ENCODE measurements at regions of chr1 and their contacts with region 1.

Region 1: GRCh38 chr1:224434691-224435317 is at the start of gene WDR26:
- DNase-seq: peak; percentile 96
- H3K4me3 Mint-ChIP-seq: peak within 1 kb of the TSS; percentile 96
- H3K27ac Mint-ChIP-seq: peak within 1 kb of the TSS; percentile 97
- H3K4me1 Mint-ChIP-seq: peaks cover 43% of the 10 kb centered on the region
- H3K27me3 Mint-ChIP-seq: no peaks in the 10 kb centered on the region
- total RNA-seq, gene WDR26: 81.0 and 90.9 TPM in 2 replicates

Region 2: DNA sequence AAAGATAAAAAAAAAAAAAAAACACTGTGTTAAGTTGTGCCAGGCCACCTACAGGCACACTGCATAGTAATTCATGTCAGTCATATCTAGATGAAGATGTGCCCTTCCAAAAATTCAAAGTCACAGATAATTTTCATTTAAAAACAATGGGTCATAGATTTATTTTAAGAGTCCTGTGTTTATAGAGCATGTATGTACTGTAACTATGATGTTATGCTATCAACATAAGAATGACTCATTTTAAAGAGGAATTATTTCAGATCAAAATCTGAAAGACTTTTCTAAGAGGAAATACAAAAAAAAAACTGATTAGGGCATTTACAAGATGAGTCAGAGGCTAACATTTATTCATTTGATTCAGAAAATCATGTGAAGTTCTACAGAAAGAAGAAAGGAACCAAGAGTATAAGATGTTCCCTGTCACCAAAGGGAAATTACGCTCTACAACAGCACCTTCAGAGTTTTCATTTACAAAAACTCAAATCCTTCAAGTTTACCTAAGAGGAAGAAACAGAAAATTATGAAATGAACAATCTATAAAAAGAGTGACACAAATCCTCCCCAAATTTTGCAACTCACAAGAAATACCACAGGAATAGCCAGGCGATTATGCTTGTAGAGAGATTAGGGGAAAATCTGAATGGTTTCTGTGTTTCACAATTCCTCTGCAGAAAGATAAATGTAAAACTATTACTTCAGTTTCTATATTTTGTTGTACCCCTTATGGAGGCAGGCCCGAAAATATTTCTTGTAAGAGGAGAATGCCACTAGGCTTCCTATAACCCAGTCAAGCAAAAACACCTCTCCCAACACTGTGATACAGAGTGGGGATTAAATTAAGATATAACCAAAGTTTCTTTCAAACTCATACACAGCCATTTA is 602.8 kb before region 1 on chr1:
- intact Hi-C with region 1: loop called (anchors 5 kb)
- DNase-seq: no peak
- H3K4me3 Mint-ChIP-seq: peak overlapping the region; percentile 51
- H3K27ac Mint-ChIP-seq: peak overlapping the region; percentile 85
- H3K4me1 Mint-ChIP-seq: peaks cover 29% of the 10 kb centered on the region
- H3K27me3 Mint-ChIP-seq: no peaks in the 10 kb centered on the region

Region 3: DNA sequence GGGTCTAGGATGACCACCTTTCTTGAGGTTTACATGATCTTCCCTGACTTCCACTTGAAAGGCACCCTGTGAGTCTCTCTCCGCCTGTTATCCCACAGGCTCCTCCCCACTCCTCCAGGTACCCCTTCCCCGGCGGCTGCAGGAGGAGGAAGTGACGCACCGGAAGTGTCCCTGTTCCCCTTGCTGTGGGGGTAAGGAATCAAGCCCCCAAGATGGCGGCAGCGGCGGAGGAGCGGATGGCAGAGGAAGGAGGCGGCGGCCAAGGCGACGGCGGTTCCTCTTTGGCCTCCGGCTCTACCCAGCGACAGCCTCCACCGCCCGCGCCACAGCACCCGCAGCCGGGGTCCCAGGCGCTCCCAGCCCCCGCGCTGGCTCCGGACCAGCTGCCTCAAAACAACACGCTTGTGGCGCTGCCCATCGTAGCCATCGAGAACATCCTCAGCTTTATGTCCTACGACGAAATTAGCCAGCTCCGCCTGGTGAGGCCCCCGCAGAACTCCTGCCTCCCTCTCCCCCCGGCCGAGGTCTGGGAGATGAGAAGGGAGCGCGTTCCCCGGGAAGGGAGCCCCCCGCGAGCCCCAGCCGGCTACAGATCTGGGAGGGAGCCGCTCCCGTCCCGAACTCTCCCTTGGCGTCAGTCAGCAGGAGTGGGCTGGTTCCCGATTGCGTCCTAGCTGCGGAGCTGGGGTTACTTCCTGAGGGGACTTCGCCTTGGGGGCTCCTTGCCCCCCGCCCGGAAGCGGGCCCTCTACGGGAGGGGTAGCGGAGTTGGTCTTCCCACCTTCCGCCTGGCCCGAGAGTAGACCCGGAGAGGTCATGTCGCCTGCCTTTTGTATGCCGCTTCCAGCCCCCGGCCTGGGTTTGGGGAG is 320.7 kb before region 1 on chr1 and contains the start of gene FBXO28:
- intact Hi-C with region 1: loop called (anchors 2 kb)
- DNase-seq: peak; percentile 98
- H3K4me3 Mint-ChIP-seq: peak within 1 kb of the TSS; percentile 88
- H3K27ac Mint-ChIP-seq: peak within 1 kb of the TSS; percentile 84
- H3K4me1 Mint-ChIP-seq: peaks cover 23% of the 10 kb centered on the region
- H3K27me3 Mint-ChIP-seq: peaks cover 15% of the 10 kb centered on the region
- total RNA-seq, gene FBXO28: 26.0 and 26.3 TPM in 2 replicates

Region 4: DNA sequence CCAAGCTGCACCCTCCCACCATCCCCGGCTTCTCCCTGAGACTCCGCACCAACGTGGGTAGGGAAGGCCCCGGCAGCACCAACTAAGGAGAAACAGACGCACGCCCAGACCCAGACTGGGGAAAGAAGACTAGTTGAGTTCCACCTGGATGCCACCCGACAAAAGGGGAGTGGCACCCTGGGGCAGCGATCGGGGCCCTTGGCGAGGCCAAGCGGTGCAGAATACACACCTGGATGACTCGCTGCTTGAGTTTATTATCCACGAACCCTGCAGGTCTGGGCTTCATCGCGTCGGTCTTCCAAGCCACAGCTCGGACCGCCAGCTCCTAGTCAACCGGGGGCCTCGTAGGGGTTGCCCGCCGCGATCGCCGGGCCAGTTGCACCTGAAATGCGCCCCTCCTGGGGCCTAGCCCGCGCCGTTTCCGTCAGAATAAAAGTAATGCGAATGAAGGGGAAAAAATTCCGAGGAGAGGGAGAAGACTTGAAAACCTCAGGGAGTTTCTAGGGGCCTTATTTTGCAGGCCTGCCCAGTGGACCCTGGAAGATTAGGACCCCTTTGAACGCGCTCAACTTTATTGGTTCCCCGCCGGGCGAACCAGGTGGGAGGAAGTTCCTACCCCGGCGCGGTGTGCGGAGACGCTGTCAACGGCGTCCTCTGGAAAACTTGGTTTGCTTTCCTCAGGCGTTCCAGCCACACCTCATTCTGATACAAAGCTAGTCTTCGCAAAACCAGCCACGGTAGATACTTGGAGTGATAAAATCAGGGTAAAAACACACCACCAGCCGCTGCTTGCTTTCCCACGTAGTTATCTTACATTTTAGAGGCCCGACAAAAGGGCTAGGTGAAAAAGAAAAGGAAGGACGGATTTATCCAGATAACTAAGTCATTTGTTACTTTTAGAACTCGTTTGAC is 104.7 kb before region 1 on chr1 and contains the start of gene NVL:
- intact Hi-C with region 1: loop called (anchors 2 kb)
- DNase-seq: peak; percentile 93
- H3K4me3 Mint-ChIP-seq: peak within 1 kb of the TSS; percentile 100
- H3K27ac Mint-ChIP-seq: peak within 1 kb of the TSS; percentile 99
- H3K4me1 Mint-ChIP-seq: peaks cover 46% of the 10 kb centered on the region
- H3K27me3 Mint-ChIP-seq: no peaks in the 10 kb centered on the region
- total RNA-seq, gene NVL: 41.4 and 52.4 TPM in 2 replicates

Region 5: GRCh38 chr1:224377676-224378006 is 57.2 kb before region 1 on chr1:
- intact Hi-C with region 1: loop called (anchors 2 kb)
- DNase-seq: peak; percentile 71
- H3K4me3 Mint-ChIP-seq: peak overlapping the region; percentile 56
- H3K27ac Mint-ChIP-seq: peak overlapping the region; percentile 84
- H3K4me1 Mint-ChIP-seq: peaks cover 84% of the 10 kb centered on the region
- H3K27me3 Mint-ChIP-seq: no peaks in the 10 kb centered on the region

Region 6: DNA sequence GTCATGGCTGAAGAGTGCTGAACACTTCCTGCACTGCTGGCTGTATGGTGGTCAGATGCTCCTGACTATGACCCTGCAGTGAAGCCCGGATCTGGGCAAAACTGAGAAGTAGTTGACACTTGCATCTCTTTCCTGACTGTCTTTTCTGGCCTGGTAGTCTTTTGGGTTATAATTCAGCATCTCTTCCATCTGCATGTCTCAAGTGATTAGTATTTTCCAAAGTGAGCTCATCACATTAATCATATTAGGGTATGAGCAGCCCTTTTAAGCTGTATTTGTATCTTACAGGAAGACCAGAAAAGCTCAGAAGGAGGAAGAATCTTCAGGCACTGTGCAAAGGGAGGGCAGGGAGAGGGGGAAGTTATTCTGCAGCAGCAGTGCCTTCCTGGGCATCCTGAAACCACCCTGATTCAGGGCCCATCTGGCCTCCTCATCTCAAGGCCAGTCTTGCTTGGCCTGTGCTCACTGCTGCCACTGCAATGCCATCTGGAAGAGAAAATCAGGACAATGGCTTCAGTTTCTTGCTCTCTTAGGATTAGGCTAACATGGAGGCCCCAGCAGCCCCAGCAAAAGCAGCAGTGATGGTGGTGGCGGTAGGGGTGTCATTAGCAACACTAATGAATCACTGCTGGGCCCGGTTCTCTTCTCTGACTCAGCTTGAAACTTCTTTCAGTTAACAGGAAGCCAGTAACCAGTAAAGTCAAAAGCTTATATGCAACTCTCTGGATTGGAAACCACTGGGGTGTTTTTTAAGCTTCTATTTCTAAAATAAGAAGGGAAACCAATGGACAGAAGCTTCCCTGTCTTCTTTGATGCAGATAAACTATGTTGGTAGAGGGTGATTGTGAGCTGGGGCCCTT is 63.1 kb after region 1 on chr1:
- intact Hi-C with region 1: loop called (anchors 1 kb)
- DNase-seq: peak; percentile 89
- H3K4me3 Mint-ChIP-seq: peak overlapping the region; percentile 68
- H3K27ac Mint-ChIP-seq: peak overlapping the region; percentile 94
- H3K4me1 Mint-ChIP-seq: peaks cover 53% of the 10 kb centered on the region
- H3K27me3 Mint-ChIP-seq: no peaks in the 10 kb centered on the region

Measured in activated CD4-positive, alpha-beta T cell treated with anti-CD3 and anti-CD28 coated beads, Interleukin-2, amount 10 ng/mL, durations not matched to agents 24 days and 14 days (primary cell).